ENCODE measurements at regions of chr20 and their contacts with region 1.

Region 1: GRCh38 chr20:19784511-19785172 is 26.6 kb downstream of the RIN2 start:
- DNase-seq: peak; percentile 90 to 92
- H3K4me3 ChIP-seq: peak overlapping the region; percentile 29; the same call in 1 of the 2 replicates
- H3K27ac ChIP-seq: peak overlapping the region; percentile 91
- H3K4me1 ChIP-seq: peaks cover 44% of the 10 kb centered on the region
- H3K27me3 ChIP-seq: no peaks in the 10 kb centered on the region
- CTCF ChIP-seq: peak; percentile 93

Region 2: GRCh38 chr20:19531446-19531845 is 253.2 kb before region 1 on chr20:
- CTCF ChIA-PET with region 1: no interaction called
- POLR2A ChIA-PET with region 1: no interaction called
- intact Hi-C with region 1: no loop called
- DNase-seq: no peak
- H3K4me3 ChIP-seq: no peak overlapping the region
- H3K27ac ChIP-seq: no peak overlapping the region
- H3K4me1 ChIP-seq: no peaks in the 10 kb centered on the region
- H3K27me3 ChIP-seq: peaks cover 36% of the 10 kb centered on the region
- CTCF ChIP-seq: no peak

Region 3: DNA sequence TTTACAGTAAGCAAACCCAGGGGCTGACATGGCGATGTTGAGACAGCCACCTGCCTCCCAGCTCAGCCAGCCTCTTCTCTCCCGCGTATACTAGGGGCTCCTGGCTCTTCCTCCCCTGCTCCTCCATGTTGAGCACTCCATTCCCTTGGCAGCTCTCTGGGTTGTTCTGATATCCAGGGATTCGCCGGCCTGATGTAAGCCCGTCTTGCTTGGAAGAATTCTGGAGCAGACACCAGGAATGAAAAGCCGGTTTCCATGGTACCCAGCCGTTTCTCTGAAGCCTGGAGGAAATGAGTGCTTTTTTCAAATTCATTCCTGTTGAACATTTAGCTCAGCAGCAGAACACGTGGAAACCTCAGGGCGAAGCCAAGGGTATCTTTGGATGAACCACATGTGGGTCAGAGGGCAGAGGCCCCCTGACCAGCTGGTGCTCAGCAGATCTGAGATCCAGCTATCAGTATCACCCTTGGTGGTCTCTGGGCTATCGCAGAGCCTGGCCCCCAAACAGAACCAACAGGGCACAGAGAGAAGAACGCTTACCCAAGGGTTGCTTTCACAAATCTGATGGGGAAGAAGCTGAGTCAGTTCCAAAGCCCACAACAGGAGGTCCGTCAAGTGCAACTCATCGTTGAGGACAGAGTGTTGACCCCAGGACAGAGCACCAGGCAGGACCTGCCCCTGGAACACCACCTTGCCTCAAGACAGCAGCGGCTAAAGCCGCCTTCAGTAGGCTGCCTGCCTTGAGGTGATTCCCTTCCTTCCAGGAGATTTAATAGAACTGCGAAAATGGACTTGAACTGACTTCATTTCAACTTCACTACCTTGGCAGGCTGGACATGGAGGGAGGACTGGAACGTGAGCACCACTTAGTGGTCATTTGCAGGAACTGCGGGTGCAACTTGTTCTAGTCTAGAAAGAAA is 122.7 kb before region 1 on chr20:
- CTCF ChIA-PET with region 1: interaction called, 11 read pairs
- POLR2A ChIA-PET with region 1: no interaction called
- intact Hi-C with region 1: no loop called
- DNase-seq: peak; percentile 49 to 52
- H3K4me3 ChIP-seq: no peak overlapping the region
- H3K27ac ChIP-seq: no peak overlapping the region
- H3K4me1 ChIP-seq: no peaks in the 10 kb centered on the region
- H3K27me3 ChIP-seq: peaks cover 94% of the 10 kb centered on the region
- CTCF ChIP-seq: peak; percentile 97

Region 4: DNA sequence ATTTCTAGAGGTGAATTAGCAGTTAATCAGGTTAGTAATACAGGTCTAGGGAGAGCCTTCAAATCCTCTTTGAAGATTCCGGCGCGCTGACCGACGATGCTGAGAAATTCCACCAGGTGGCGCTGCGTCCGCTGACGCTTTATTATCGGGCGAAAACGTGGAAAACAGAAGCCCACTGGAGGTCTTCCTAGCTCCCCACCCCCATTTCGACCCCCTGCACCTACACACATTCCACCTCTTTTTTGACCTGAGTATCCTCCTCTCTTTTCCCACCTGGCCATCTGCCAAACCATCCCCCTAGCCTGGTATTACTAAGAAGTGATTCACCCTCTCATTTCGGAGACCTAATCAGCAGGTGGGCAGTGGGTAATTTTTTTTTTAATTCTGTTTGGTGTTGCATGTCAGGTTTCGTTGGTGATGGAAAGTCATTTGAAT is 91.9 kb before region 1 on chr20:
- CTCF ChIA-PET with region 1: interaction called, 3 read pairs
- POLR2A ChIA-PET with region 1: no interaction called
- intact Hi-C with region 1: loop called (anchors 1 kb)
- DNase-seq: peak; percentile 70 to 72
- H3K4me3 ChIP-seq: peak overlapping the region; percentile 34; the same call in 1 of the 2 replicates
- H3K27ac ChIP-seq: peak overlapping the region; percentile 45
- H3K4me1 ChIP-seq: peaks cover 10% of the 10 kb centered on the region
- H3K27me3 ChIP-seq: no peaks in the 10 kb centered on the region
- CTCF ChIP-seq: peak; percentile 98

Region 5: DNA sequence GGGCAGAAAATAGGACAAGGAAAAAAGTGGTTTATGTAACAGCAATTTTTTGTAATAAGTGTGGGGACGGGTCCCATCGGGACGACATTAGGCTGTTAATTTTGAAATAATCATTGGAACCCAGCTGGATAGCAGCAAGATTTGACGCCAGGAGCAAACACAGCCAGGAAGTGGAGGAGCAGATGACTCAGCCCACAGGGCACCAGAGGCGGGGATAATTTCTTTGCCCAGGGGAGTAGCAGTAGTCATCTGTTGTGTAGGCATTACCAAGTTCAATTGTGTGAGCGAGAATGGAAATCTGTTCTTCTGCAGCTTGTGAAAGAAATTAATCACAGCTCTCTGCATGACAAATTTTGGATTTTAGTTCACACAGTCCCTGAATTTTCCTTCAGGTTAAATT is 49.2 kb before region 1 on chr20:
- CTCF ChIA-PET with region 1: no interaction called
- POLR2A ChIA-PET with region 1: no interaction called
- intact Hi-C with region 1: loop called (anchors 1 kb)
- DNase-seq: peak; percentile 79 to 90
- H3K4me3 ChIP-seq: no peak overlapping the region
- H3K27ac ChIP-seq: peak overlapping the region; percentile 100
- H3K4me1 ChIP-seq: peaks cover 49% of the 10 kb centered on the region
- H3K27me3 ChIP-seq: no peaks in the 10 kb centered on the region
- CTCF ChIP-seq: no peak

Region 6: GRCh38 chr20:19757487-19758132 is 27.0 kb before region 1 on chr20:
- CTCF ChIA-PET with region 1: interaction called, 4 read pairs
- POLR2A ChIA-PET with region 1: interaction called, 20 read pairs
- intact Hi-C with region 1: loop called (anchors 1 kb)
- DNase-seq: peak; percentile 71 to 79
- H3K4me3 ChIP-seq: peak overlapping the region; percentile 82
- H3K27ac ChIP-seq: peak overlapping the region; percentile 99
- H3K4me1 ChIP-seq: peaks cover 38% of the 10 kb centered on the region
- H3K27me3 ChIP-seq: no peaks in the 10 kb centered on the region
- CTCF ChIP-seq: no peak

Region 7: DNA sequence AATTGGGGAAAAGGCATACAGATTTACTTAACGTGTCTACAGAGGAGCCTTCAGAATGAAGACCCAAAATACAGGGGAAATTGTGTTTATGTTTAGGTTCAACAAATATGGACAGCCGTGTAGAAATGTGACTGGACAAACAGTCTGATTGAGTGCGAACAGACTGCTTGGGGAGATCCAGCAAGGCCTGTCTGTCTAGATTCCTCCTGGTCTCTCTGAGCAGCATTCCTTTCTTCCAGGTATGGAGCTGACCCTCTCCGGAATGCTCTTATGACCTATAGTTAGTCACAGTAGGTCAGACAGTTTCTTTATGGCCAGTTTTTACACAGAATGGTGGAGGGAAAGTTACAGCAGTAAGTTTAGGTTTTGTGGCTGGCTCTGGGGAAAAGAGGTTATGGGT is 17.6 kb before region 1 on chr20:
- CTCF ChIA-PET with region 1: interaction called, 4 read pairs
- POLR2A ChIA-PET with region 1: interaction called, 3 read pairs
- intact Hi-C with region 1: loop called (anchors 1 kb)
- DNase-seq: peak; percentile 77 to 97
- H3K4me3 ChIP-seq: peak overlapping the region; percentile 20; the same call in 1 of the 2 replicates
- H3K27ac ChIP-seq: peak overlapping the region; percentile 97
- H3K4me1 ChIP-seq: peaks cover 56% of the 10 kb centered on the region
- H3K27me3 ChIP-seq: no peaks in the 10 kb centered on the region
- CTCF ChIP-seq: no peak

Region 8: DNA sequence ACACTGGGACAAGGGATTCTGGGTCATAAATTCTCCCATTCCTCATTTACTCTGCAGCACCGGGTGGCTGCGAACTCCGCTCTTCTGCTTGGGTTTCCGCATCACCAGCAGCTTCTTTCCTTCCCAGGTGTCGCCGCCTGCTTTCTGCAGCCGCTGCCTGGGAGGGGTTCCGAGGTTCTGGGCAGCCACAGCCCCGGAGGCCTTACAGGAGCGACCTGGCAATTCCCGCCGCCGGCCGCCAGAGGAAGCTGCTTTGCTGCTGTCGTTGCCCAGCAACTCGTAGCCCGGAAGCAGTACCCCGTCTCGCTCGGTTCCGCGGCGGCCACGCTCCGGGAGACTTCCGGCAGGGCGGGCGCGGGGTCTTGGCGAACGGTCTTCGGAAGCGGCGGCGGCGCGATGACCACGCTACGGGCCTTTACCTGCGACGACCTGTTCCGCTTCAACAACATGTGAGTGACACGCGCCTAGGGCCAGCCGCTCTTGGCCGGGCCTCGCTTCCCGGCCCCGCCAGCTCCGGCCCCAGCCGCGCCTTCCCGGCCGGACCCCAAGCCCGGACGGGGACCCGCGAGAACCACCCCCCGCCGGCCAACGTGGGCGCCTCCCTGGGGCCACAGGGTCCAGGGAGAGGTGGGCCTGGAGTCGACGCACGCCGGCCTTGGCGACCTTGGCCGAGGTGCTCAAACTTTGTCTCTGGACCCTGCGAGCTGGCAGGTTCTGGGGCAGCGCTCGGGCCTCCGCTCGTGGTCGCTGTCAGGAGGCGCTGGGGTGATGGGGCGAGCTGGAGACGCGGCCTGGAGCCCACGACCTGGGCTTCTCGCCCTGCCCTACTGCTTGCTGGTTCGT is 232.6 kb after region 1 on chr20 and contains the start of gene NAA20:
- CTCF ChIA-PET with region 1: no interaction called
- POLR2A ChIA-PET with region 1: interaction called, 3 read pairs
- intact Hi-C with region 1: loop called (anchors 1 kb)
- DNase-seq: peak; percentile 85 to 96
- H3K4me3 ChIP-seq: peak within 1 kb of the TSS; percentile 99
- H3K27ac ChIP-seq: peak within 1 kb of the TSS; percentile 74
- H3K4me1 ChIP-seq: peaks cover 26% of the 10 kb centered on the region
- H3K27me3 ChIP-seq: no peaks in the 10 kb centered on the region
- CTCF ChIP-seq: peak; percentile 51; the same call in 1 of the 2 replicates
- total RNA-seq, gene NAA20: 167 and 168 TPM in 2 replicates

Measured in PC-9 (cell line).